Naive thymus-derived CD4-positive, alpha-beta T cell (primary cell): ENCODE measurements at regions of chrX and their contacts with region 1.

Region 1: DNA sequence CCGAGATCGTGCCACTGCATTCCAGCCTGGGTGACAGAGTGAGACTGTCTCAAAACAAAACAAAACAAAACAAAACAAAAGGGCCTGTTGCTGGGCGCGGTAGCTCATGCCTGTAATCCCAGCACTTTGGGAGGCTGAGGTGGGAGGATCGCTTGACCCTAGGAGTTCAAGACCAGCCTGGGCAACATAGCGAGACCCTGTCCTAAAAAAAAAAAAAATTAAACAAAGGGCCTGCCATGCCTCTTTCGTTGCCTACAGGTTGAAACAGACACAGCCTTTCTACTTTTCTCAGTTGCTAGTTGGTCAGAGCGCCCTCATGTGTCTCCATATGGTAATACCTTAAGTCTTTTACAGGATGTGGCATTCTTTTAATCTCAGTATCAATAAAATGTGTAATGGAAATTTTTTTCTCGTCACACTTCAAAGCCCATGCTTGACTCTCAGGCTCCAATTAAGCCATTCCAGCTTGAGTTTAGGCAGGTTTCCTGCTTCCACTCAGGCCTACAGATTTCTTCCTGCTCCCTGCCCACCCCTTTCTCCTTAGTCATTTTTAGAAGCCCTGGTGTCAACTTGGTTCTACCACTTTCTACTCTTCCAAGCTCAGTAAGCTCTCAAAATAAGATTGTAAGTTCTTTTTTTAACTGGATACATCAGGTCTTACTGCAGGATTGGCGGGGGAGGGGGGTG is 4.7 kb upstream of the SOWAHD start:
- DNase-seq: peak in 7 of 9 donors; percentile 77 to 89 (median 80)
- ATAC-seq: peak; percentile 83
- H3K4me3 ChIP-seq: no peak overlapping the region
- H3K4me3 Mint-ChIP-seq: peak overlapping the region; percentile 40 to 81 (median 70)
- H3K27ac ChIP-seq: peak overlapping the region; percentile 76
- H3K27ac Mint-ChIP-seq: peak overlapping the region; percentile 90 to 99 (median 96)
- H3K4me1 ChIP-seq: peaks cover 38 to 39% of the 10 kb centered on the region in 2 donors
- H3K4me1 Mint-ChIP-seq: peaks cover 21 to 50% (median 40%) of the 10 kb centered on the region in 7 donors
- H3K27me3 ChIP-seq: no peaks in the 10 kb centered on the region
- H3K27me3 Mint-ChIP-seq: no peaks in the 10 kb centered on the region

Region 2: GRCh38 chrX:119488749-119489148 is 265.0 kb before region 1 on chrX:
- CTCF ChIA-PET with region 1: no interaction called
- POLR2A ChIA-PET with region 1: no interaction called
- intact Hi-C with region 1: loop called in 1 of 2 experiments (anchors 1 kb)
- DNase-seq: peak in 5 of 9 donors; percentile 14 to 41 (median 36)
- ATAC-seq: peak; percentile 54
- H3K4me3 ChIP-seq: no peak overlapping the region
- H3K4me3 Mint-ChIP-seq: no peak overlapping the region
- H3K27ac ChIP-seq: no peak overlapping the region
- H3K27ac Mint-ChIP-seq: no peak overlapping the region
- H3K4me1 ChIP-seq: no peaks in the 10 kb centered on the region
- H3K4me1 Mint-ChIP-seq: peaks cover 0 to 7% (median 0%) of the 10 kb centered on the region in 7 donors
- H3K27me3 ChIP-seq: no peaks in the 10 kb centered on the region
- H3K27me3 Mint-ChIP-seq: no peaks in the 10 kb centered on the region

Region 3: DNA sequence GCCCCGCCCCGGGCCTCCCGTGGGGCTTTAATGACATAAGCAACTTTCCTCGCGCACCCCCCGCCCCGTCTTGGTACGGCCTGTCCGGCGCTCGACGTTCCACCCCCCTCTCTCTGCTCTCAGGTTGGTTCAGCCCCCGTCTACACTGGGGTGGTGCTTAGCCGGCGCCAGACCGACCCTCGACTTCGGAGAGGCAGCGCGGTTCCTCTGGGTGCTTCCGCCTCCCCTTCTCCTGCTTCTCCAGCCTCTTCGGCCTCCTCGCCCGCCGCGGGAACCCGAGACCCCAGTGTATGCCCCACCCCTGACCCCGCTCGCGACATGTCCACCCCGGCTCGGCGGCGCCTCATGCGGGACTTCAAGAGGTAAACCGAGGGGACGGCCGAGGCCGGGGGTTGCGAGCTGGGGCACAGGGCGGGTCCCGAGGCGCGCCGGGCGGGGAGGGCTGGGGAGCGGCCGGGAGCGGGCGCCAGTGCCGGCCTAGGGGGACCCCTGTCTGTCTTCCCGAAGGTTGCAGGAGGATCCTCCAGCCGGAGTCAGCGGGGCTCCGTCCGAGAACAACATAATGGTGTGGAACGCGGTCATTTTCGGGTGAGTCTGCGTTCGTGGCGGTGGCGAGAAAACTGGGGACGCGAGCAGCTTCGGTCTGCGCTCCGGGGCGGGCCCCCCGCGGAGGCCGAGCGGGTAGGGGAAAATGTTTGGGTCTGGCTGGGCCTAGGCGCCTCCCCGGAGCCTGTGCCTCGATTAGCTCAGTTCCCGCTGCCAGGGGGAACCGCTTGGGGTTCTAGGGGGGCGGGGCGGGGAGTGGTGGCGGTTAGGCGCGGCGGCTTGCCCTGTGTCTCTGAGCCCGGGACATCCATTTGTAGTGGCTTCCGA is 179.1 kb before region 1 on chrX and contains the start of gene UBE2A:
- CTCF ChIA-PET with region 1: no interaction called
- POLR2A ChIA-PET with region 1: interaction called, 5 read pairs
- intact Hi-C with region 1: loop called (anchors 1 kb)
- DNase-seq: peak; percentile 72 to 89 (median 85)
- ATAC-seq: peak; percentile 99
- H3K4me3 ChIP-seq: peak within 1 kb of the TSS; percentile 72
- H3K4me3 Mint-ChIP-seq: peak within 1 kb of the TSS; percentile 85 to 96 (median 92)
- H3K27ac ChIP-seq: peak within 1 kb of the TSS; percentile 88
- H3K27ac Mint-ChIP-seq: peak within 1 kb of the TSS; percentile 85 to 97 (median 90)
- H3K4me1 ChIP-seq: peaks cover 0 to 11% of the 10 kb centered on the region in 2 donors
- H3K4me1 Mint-ChIP-seq: peaks cover 7 to 35% (median 18%) of the 10 kb centered on the region in 7 donors
- H3K27me3 ChIP-seq: no peaks in the 10 kb centered on the region
- H3K27me3 Mint-ChIP-seq: no peaks in the 10 kb centered on the region
- total RNA-seq, gene UBE2A: 34.0 to 74.7 (median 60.2) TPM

Region 4: GRCh38 chrX:119775517-119776238 is 22.0 kb after region 1 on chrX:
- CTCF ChIA-PET with region 1: interaction called, 7 read pairs
- POLR2A ChIA-PET with region 1: interaction called, 4 read pairs
- intact Hi-C with region 1: loop called (anchors 1 kb)
- DNase-seq: no peak
- ATAC-seq: peak; percentile 59
- H3K4me3 ChIP-seq: no peak overlapping the region
- H3K4me3 Mint-ChIP-seq: peak overlapping the region in 2 of 10 donors; percentile 31 to 54
- H3K27ac ChIP-seq: no peak overlapping the region
- H3K27ac Mint-ChIP-seq: peak overlapping the region in 2 of 9 donors; percentile 36 to 73
- H3K4me1 ChIP-seq: no peaks in the 10 kb centered on the region
- H3K4me1 Mint-ChIP-seq: peaks cover 0 to 6% (median 0%) of the 10 kb centered on the region in 7 donors
- H3K27me3 ChIP-seq: no peaks in the 10 kb centered on the region
- H3K27me3 Mint-ChIP-seq: no peaks in the 10 kb centered on the region

Region 5: DNA sequence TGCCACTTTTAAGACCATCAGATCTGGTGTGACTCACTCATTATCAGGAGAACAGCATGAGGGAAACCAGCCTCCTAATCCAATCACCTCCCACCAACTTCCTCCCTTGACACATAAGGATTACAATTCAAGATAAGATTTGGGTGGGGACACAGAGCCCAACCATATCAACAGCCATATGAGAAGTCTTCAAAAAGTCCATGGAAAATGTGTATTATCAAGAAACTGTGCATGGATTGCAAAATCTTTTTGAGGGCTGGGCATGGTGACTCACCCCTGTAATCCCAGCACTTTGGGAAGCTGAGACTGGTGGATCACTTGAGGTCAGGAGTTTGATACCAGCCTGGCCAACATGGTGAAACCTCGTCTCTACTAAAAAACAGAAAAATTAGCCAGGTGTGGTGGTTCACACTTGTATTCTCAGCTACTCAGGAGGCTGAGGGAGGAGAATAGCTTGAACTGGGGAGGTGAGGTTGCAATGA is 55.5 kb after region 1 on chrX:
- CTCF ChIA-PET with region 1: no interaction called
- POLR2A ChIA-PET with region 1: no interaction called
- intact Hi-C with region 1: no loop called
- DNase-seq: no peak
- ATAC-seq: no peak
- H3K4me3 ChIP-seq: no peak overlapping the region
- H3K4me3 Mint-ChIP-seq: no peak overlapping the region
- H3K27ac ChIP-seq: no peak overlapping the region
- H3K27ac Mint-ChIP-seq: no peak overlapping the region
- H3K4me1 ChIP-seq: no peaks in the 10 kb centered on the region
- H3K4me1 Mint-ChIP-seq: peaks cover 0 to 3% (median 0%) of the 10 kb centered on the region in 7 donors
- H3K27me3 ChIP-seq: no peaks in the 10 kb centered on the region
- H3K27me3 Mint-ChIP-seq: no peaks in the 10 kb centered on the region

Region 6: GRCh38 chrX:120015145-120016067 is 261.7 kb after region 1 on chrX:
- CTCF ChIA-PET with region 1: no interaction called
- POLR2A ChIA-PET with region 1: no interaction called
- intact Hi-C with region 1: no loop called
- DNase-seq: no peak
- ATAC-seq: peak; percentile 24
- H3K4me3 ChIP-seq: no peak overlapping the region
- H3K4me3 Mint-ChIP-seq: peak overlapping the region; percentile 16 to 82 (median 70)
- H3K27ac ChIP-seq: no peak overlapping the region
- H3K27ac Mint-ChIP-seq: peak overlapping the region in 2 of 9 donors; percentile 19 to 62
- H3K4me1 ChIP-seq: peaks cover 0 to 6% of the 10 kb centered on the region in 2 donors
- H3K4me1 Mint-ChIP-seq: peaks cover 0 to 13% (median 8%) of the 10 kb centered on the region in 7 donors
- H3K27me3 ChIP-seq: peaks cover 0 to 6% of the 10 kb centered on the region in 2 donors
- H3K27me3 Mint-ChIP-seq: peaks cover 20 to 72% (median 34%) of the 10 kb centered on the region in 5 donors